ENCODE measurements at regions of chr19 and their contacts with region 1.

Region 1: GRCh38 chr19:19488875-19489690 is 26.3 kb downstream of the TSSK6 start:
- DNase-seq: peak; percentile 93 to 99 (median 95)
- H3K4me3 ChIP-seq: peak overlapping the region; percentile 9 to 37
- H3K4me3 Mint-ChIP-seq: peak overlapping the region; percentile 68 to 87 (median 78)
- H3K27ac ChIP-seq: peak overlapping the region; percentile 80
- H3K27ac Mint-ChIP-seq: peak overlapping the region; percentile 98 to 100 (median 100)
- H3K4me1 ChIP-seq: peaks cover 54% of the 10 kb centered on the region
- H3K4me1 Mint-ChIP-seq: peaks cover 29 to 67% (median 47%) of the 10 kb centered on the region in 4 donors
- H3K27me3 ChIP-seq: no peaks in the 10 kb centered on the region
- H3K27me3 Mint-ChIP-seq: no peaks in the 10 kb centered on the region

Region 2: DNA sequence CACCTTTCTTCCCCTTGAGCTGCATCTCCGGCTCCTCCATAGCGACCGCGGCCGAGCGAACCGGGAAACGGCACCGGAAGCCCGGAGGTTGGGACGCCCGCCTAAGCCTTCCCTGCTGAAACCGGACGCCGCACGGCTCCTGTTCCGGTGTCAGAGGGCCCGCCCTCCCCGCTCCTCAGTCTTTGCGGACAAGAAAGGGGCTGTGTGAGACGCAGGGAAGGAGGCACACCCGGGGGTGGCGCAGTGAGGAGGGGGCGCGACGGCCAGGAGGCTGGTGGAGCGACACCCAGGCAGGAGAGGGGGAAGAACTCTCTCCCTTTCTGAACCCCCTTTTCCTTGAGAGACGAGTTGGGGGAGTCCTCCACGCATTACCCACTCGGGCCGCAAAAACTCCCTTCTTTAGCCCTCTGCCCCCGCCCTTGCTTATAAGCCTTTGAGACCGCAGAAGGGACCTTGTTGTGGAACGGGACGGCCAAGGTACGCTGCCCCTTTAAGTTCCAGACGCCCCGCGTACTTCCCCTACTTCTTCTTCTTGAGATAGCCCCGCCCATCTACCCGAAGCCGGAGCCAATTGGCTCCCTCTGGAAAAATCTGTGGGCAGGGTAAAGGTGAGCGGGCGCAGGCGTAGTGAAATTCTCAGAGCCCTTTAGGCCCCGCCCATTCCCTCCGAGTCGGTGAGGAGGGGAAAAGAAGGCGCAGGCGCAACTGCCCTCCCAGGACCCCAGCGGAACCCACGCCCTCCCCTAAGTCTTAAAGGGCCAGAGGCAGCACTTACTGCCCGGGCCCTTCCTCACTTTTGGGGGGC is 296.8 kb before region 1 on chr19 and contains the starts of genes BORCS8 and RFXANK:
- CTCF ChIA-PET with region 1: no interaction called
- POLR2A ChIA-PET with region 1: interaction called, 11 read pairs
- intact Hi-C with region 1: loop called (anchors 2 kb)
- DNase-seq: peak; percentile 97 to 99 (median 99)
- H3K4me3 ChIP-seq: peak within 1 kb of the TSS; percentile 98 to 100
- H3K4me3 Mint-ChIP-seq: peak within 1 kb of the TSS; percentile 95 to 99 (median 98)
- H3K27ac ChIP-seq: peak within 1 kb of the TSS; percentile 100
- H3K27ac Mint-ChIP-seq: peak within 1 kb of the TSS; percentile 98 to 100 (median 99)
- H3K4me1 ChIP-seq: peaks cover 44% of the 10 kb centered on the region
- H3K4me1 Mint-ChIP-seq: peaks cover 18 to 55% (median 37%) of the 10 kb centered on the region in 4 donors
- H3K27me3 ChIP-seq: no peaks in the 10 kb centered on the region
- H3K27me3 Mint-ChIP-seq: no peaks in the 10 kb centered on the region
- total RNA-seq, gene BORCS8: 36.0 to 41.2 TPM
- total RNA-seq, gene RFXANK: 69.5 to 77.2 TPM

Region 3: DNA sequence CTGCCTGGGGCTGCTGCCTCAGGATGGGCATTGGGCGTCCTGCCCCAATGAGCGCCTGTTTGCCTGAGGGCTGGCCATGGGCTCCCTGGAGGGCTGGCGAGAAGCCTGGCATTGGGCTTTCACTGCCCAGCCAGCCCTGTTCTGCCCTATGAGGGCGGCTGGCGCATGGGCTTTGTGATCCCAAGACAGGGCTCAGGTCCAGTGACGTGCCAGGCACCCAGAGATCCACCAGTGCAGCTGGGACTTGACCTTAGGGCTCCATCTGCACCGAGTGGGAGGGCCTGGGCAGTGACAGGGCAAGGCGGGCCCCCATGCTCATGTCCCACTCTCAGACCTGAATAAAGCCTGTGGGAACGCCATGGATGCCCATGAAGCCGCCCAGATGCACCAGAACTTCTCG is 134.2 kb before region 1 on chr19:
- CTCF ChIA-PET with region 1: interaction called, 11 read pairs
- POLR2A ChIA-PET with region 1: interaction called, 9 read pairs
- intact Hi-C with region 1: no loop called
- DNase-seq: no peak
- H3K4me3 ChIP-seq: no peak overlapping the region
- H3K4me3 Mint-ChIP-seq: no peak overlapping the region
- H3K27ac ChIP-seq: no peak overlapping the region
- H3K27ac Mint-ChIP-seq: no peak overlapping the region
- H3K4me1 ChIP-seq: peaks cover 11% of the 10 kb centered on the region
- H3K4me1 Mint-ChIP-seq: peaks cover 8 to 22% (median 14%) of the 10 kb centered on the region in 4 donors
- H3K27me3 ChIP-seq: no peaks in the 10 kb centered on the region
- H3K27me3 Mint-ChIP-seq: no peaks in the 10 kb centered on the region

Region 4: GRCh38 chr19:19372656-19373416 is 116.2 kb before region 1 on chr19:
- CTCF ChIA-PET with region 1: interaction called, 287 read pairs
- POLR2A ChIA-PET with region 1: interaction called, 134 read pairs
- intact Hi-C with region 1: no loop called
- DNase-seq: peak; percentile 40 to 58 (median 52)
- H3K4me3 ChIP-seq: no peak overlapping the region
- H3K4me3 Mint-ChIP-seq: peak overlapping the region in 7 of 8 donors; percentile 50 to 73 (median 54)
- H3K27ac ChIP-seq: peak overlapping the region; percentile 63
- H3K27ac Mint-ChIP-seq: peak overlapping the region; percentile 79 to 95 (median 92)
- H3K4me1 ChIP-seq: peaks cover 18% of the 10 kb centered on the region
- H3K4me1 Mint-ChIP-seq: peaks cover 6 to 14% (median 9%) of the 10 kb centered on the region in 4 donors
- H3K27me3 ChIP-seq: no peaks in the 10 kb centered on the region
- H3K27me3 Mint-ChIP-seq: no peaks in the 10 kb centered on the region

Region 5: DNA sequence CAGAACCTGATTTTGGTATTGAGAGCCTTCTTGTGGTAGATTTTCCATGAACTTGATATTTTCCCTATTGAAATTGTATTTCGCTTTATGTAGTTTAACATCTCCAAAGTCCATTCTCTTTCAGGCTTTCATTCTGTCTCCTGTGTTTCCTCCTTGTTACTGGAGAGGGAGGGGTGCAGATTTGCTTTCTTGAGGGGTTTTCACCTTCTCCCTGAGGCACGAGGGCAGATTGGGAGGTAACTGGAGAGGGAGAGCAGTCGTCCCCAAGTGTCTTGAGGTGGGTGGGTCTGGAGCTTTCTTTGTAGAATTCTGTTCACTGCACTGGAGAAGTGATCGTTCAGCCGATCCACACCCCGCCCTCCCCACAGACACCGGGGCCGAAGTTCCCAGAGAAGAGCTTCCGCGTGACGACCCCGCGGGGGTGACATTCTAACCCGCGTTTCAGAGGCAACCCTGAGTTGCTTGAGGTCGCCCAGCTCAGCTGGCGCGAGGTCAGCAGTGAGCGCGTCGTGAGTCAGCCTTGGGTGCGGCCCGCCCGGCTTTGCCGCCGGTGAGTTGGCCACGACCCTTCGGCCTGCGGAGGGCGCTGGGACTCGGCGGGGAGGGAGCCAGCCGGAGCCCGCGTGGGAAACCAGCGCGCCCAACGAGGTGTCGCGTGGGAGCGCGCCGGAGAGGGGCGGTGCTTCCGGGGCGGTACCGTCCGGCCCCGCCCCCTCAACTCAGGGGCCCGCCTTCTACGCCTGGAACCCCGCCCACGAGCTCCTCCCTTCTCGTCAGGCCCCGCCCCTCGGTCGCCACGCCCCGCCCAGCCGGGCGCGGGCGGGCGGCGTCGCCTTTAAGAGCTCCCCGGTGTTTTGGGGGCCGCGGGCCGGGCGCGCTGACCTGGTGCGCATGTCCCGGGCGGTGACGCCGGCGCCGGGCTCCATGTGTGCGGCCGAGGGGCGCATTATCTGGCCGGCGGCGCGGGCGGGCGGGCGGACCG is 83.9 kb before region 1 on chr19 and contains the start of gene GATAD2A:
- CTCF ChIA-PET with region 1: interaction called, 73 read pairs
- POLR2A ChIA-PET with region 1: interaction called, 85 read pairs
- intact Hi-C with region 1: loop called (anchors 1 kb)
- DNase-seq: peak; percentile 86 to 94 (median 90)
- H3K4me3 ChIP-seq: peak within 1 kb of the TSS; percentile 21 to 78
- H3K4me3 Mint-ChIP-seq: peak within 1 kb of the TSS; percentile 86 to 97 (median 95)
- H3K27ac ChIP-seq: peak within 1 kb of the TSS; percentile 71
- H3K27ac Mint-ChIP-seq: peak within 1 kb of the TSS; percentile 92 to 96 (median 95)
- H3K4me1 ChIP-seq: peaks cover 53% of the 10 kb centered on the region
- H3K4me1 Mint-ChIP-seq: peaks cover 36 to 72% (median 55%) of the 10 kb centered on the region in 4 donors
- H3K27me3 ChIP-seq: no peaks in the 10 kb centered on the region
- H3K27me3 Mint-ChIP-seq: no peaks in the 10 kb centered on the region
- total RNA-seq, gene GATAD2A: 101 to 108 TPM

Region 6: GRCh38 chr19:19459707-19460251 is 29.3 kb before region 1 on chr19:
- CTCF ChIA-PET with region 1: interaction called, 36 read pairs
- POLR2A ChIA-PET with region 1: interaction called, 81 read pairs
- intact Hi-C with region 1: loop called (anchors 1 kb)
- DNase-seq: peak; percentile 63 to 89 (median 67)
- H3K4me3 ChIP-seq: peak overlapping the region; percentile 54 to 87
- H3K4me3 Mint-ChIP-seq: peak overlapping the region; percentile 86 to 95 (median 90)
- H3K27ac ChIP-seq: peak overlapping the region; percentile 79
- H3K27ac Mint-ChIP-seq: peak overlapping the region; percentile 96 to 100 (median 99)
- H3K4me1 ChIP-seq: peaks cover 88% of the 10 kb centered on the region
- H3K4me1 Mint-ChIP-seq: peaks cover 55 to 91% (median 75%) of the 10 kb centered on the region in 4 donors
- H3K27me3 ChIP-seq: no peaks in the 10 kb centered on the region
- H3K27me3 Mint-ChIP-seq: no peaks in the 10 kb centered on the region

Measured in CD4-positive, alpha-beta memory T cell (primary cell).